ENCODE measurements at regions of chr6 and their contacts with region 1.

Region 1: GRCh38 chr6:26493258-26493657 is 6.8 kb upstream of the BTN1A1 start:
- DNase-seq: peak; percentile 38 to 86 (median 68)
- ATAC-seq: peak; percentile 95
- H3K4me3 ChIP-seq: no peak overlapping the region
- H3K27ac ChIP-seq: no peak overlapping the region
- H3K4me1 ChIP-seq: peaks cover 8 to 40% of the 10 kb centered on the region in 2 experiments
- H3K27me3 ChIP-seq: no peaks in the 10 kb centered on the region
- CTCF ChIP-seq: peak; percentile 62 to 87 (median 67)
- EP300 ChIP-seq: peak; percentile 68
- POLR2A ChIP-seq: no peak
- RAD21 ChIP-seq: peak; percentile 78 to 93

Region 2: DNA sequence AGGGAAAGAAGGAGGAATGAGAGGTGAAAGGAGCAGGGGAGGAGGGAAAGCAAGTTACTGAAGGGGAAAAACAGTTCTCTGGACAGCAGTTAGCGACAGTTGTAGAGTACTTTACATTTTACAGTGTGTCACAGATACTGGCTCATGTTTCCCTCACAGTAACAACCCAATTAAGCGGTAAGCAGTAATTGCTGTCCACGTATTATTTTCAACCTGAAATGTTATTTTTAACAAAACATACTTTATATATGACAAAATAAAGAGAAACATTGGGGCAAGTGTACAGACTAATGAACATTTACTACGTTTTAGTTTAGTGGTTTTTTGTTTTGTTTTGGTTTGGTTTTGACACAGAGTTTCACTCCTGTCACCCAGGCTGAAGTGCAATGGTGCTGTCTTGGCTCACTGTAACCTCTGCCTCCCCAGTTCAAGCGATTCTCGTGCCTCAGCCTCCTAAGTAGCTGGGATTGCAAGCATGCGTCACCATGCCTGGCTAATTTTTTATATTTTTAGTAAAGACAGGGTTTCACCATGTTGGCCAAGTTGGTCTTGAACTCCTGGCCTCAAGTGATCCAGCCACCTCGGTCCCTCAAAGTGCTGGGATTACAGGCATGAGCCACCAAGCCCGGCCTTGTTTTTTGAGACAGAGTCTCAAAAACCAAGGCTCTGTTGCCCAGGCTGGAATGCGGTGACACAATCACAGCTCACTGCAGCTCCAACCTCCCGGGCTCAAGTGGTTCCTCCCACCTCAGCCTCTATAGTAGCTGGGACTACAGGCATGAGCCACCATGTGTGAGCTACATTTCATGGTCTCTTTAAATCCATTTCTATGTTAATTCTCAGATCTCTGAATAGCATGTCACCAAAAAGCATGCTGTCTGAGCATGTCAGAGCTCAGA is 150.9 kb before region 1 on chr6:
- CTCF ChIA-PET with region 1: no interaction called
- POLR2A ChIA-PET with region 1: interaction called, 3 read pairs
- in situ Hi-C with region 1: no loop called
- intact Hi-C with region 1: loop called (anchors 1 kb)
- DNase-seq: no peak
- ATAC-seq: peak; percentile 16
- H3K4me3 ChIP-seq: no peak overlapping the region
- H3K27ac ChIP-seq: no peak overlapping the region; the same call in 2 of the 3 replicates
- H3K4me1 ChIP-seq: peaks cover 11 to 54% of the 10 kb centered on the region in 2 experiments
- H3K27me3 ChIP-seq: no peaks in the 10 kb centered on the region
- CTCF ChIP-seq: no peak; a peak in 1 of 6 replicates
- EP300 ChIP-seq: no peak
- POLR2A ChIP-seq: no peak
- RAD21 ChIP-seq: no peak

Region 3: DNA sequence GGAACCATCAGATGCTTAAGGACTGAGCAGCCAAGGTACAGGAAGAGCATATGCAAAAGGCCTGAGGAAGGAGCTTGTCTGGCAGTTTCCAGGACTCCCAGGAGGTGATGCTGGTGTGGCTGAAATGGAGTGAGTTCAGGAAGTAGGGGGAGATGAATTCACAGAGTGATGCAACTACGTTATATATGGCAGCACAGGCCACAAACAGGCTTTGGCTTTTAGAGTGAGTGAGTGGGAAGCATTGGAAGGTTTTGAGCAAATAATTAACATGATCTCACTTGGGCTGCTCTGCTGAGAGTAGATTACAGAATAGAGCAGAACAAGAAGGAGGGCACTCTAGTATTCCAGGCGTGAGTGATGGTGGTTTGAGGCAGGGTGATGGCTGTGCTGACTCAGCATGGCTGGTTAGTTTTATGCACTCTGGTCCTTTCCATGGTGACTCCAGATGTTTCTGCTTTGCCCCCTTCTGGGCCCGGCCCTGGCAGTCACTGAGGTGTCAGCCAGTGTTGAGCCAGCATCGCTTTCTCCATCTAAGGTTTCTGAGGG is 103.8 kb before region 1 on chr6:
- CTCF ChIA-PET with region 1: no interaction called
- POLR2A ChIA-PET with region 1: no interaction called
- in situ Hi-C with region 1: no loop called
- intact Hi-C with region 1: loop called (anchors 1 kb)
- DNase-seq: peak in 2 of 4 experiments; percentile 57 to 61
- ATAC-seq: peak; percentile 84
- H3K4me3 ChIP-seq: no peak overlapping the region
- H3K27ac ChIP-seq: no peak overlapping the region; the same call in 2 of the 3 replicates
- H3K4me1 ChIP-seq: peaks cover 0 to 13% of the 10 kb centered on the region in 2 experiments; a peak in 4 of 5 replicates
- H3K27me3 ChIP-seq: no peaks in the 10 kb centered on the region
- CTCF ChIP-seq: peak; percentile 50 to 64 (median 50)
- EP300 ChIP-seq: peak; percentile 37; the same call in 1 of the 2 replicates
- POLR2A ChIP-seq: no peak
- RAD21 ChIP-seq: peak; percentile 69 to 87

Region 4: GRCh38 chr6:26543953-26544352 is 50.7 kb after region 1 on chr6:
- CTCF ChIA-PET with region 1: no interaction called
- POLR2A ChIA-PET with region 1: no interaction called
- in situ Hi-C with region 1: no loop called
- intact Hi-C with region 1: no loop called
- DNase-seq: peak in 2 of 4 experiments; percentile 39 to 47
- ATAC-seq: peak; percentile 82
- H3K4me3 ChIP-seq: no peak overlapping the region
- H3K27ac ChIP-seq: no peak overlapping the region
- H3K4me1 ChIP-seq: peaks cover 0 to 7% of the 10 kb centered on the region in 2 experiments; a peak in 3 of 5 replicates
- H3K27me3 ChIP-seq: no peaks in the 10 kb centered on the region
- CTCF ChIP-seq: peak in 2 of 3 experiments; percentile 56; a peak in 3 of 6 replicates
- EP300 ChIP-seq: no peak
- POLR2A ChIP-seq: no peak
- RAD21 ChIP-seq: peak in 1 of 2 experiments; percentile 48; a peak in 3 of 4 replicates